Activated naive CD4-positive, alpha-beta T cell treated with anti-CD3 and anti-CD28 coated beads for 36 hours (primary cell): ENCODE measurements at regions of chrX and their contacts with region 1.

Region 1: DNA sequence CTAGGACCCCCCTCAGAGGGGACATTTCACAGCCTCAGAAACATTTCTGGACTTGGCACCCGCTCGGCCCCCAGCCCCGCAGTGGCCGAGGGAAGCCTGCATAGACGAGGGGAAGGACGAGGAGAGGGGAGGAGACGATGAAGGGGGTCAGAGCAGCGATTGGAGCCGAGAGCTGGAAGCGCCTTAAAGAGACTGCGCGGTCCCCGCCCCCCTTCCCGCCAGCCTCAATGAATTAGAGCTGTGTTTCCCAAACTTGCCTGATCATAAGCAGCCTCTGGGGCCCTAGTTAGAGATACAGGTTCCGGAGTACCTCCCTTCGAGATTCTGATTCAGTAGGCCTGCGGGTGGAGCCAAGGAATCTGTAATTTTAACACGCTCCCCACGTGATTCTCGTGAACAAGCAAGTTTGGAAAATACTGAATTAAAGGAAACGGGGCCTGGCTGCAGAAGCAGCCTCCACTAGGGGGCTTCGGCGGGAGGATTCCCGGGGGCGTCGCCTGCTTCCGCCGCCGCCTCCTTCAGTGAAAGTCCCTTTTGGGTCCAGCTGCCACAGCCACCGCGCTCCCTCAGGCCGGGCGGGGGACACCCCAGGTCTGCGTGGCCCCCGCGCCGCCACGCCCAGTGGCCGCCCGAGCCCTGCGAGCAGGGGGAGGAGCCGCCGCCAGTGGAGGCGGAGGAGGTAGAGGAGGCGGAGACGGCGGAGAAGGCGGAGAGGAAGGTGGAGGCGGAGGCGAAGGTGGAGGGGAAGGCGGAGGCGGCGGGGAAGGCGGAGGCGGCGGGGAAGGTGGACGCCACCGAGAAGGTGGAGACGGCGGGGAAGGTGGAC is at the start of gene USP27X:
- DNase-seq: peak; percentile 77
- H3K4me3 Mint-ChIP-seq: peak within 1 kb of the TSS; percentile 74
- H3K27ac Mint-ChIP-seq: peak within 1 kb of the TSS; percentile 76
- H3K4me1 Mint-ChIP-seq: peaks cover 32% of the 10 kb centered on the region
- H3K27me3 Mint-ChIP-seq: no peaks in the 10 kb centered on the region
- total RNA-seq, gene USP27X: 1.7 to 1.9 TPM

Region 2: DNA sequence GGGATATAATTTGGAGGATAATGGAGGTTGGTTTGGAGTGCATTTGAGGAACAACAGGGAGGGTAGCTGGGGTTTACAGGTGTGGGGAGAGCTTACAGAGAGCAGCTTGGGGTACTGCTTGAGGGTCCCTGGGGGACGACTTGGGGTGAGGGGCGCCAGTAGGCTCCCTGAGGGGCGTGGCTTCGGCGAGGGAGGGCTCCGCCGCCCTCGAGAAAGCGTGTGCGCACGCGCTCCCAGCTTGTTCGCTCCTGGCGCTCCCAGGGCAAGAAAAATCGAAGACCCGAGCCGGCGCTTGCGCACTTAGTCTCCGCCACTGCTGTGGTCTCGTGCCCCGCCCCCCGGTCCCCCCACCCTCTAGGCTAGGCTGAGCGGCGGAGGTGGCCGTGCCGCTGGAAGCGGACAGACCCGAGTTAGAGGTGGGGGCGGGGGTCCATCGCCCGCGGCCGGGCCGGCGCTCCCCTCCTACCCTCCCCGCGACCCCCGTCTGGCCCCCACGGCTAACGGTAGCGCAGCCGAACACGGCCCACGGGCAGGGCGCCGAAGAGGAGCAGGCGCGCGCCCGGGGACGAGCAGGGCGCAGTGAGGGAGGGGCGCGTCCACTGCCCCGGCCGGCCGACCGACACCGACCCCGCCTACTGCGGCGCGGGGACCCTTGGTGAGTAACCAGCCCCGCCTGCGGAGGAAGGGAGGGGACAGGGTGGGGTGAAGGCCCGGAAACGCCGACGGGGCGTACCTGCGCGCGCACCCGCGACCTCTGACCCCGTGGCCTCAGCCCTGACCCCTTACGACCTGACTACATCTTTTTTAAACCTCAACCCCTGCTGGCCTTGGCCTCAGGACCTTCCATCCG is 825.6 kb before region 1 on chrX:
- CTCF ChIA-PET with region 1: no interaction called
- intact Hi-C with region 1: loop called (anchors 5 kb)
- DNase-seq: peak; percentile 66
- H3K4me3 Mint-ChIP-seq: peak overlapping the region; percentile 72
- H3K27ac Mint-ChIP-seq: peak overlapping the region; percentile 68
- H3K4me1 Mint-ChIP-seq: peaks cover 31% of the 10 kb centered on the region
- H3K27me3 Mint-ChIP-seq: no peaks in the 10 kb centered on the region

Region 3: GRCh38 chrX:49191033-49191871 is 687.8 kb before region 1 on chrX:
- CTCF ChIA-PET with region 1: no interaction called
- intact Hi-C with region 1: loop called (anchors 5 kb)
- DNase-seq: peak; percentile 89
- H3K4me3 Mint-ChIP-seq: peak overlapping the region; percentile 97
- H3K27ac Mint-ChIP-seq: peak overlapping the region; percentile 94
- H3K4me1 Mint-ChIP-seq: peaks cover 25% of the 10 kb centered on the region
- H3K27me3 Mint-ChIP-seq: no peaks in the 10 kb centered on the region

Region 4: DNA sequence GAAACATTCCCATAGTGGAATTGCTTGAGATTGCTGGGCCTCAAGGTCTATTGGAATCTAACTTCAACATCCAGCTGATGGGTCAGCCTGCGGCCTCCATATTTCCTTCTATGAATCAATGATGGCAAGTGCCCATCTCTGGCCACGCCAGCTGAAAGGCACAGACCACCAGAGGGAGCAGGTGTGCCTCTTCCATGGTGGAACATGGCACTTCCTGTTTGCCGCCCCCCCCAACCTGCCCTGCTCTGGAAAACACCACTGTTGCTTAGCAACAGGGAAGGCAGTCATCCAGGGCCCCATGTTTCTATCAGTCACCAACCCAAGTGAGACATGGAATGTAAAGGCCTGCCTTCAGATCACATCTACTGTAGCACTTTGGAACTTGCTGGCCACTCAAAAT is 38.4 kb before region 1 on chrX:
- CTCF ChIA-PET with region 1: interaction called, 3 read pairs
- intact Hi-C with region 1: loop called (anchors 1 kb)
- DNase-seq: peak; percentile 79
- H3K4me3 Mint-ChIP-seq: no peak overlapping the region
- H3K27ac Mint-ChIP-seq: no peak overlapping the region
- H3K4me1 Mint-ChIP-seq: peaks cover 2% of the 10 kb centered on the region
- H3K27me3 Mint-ChIP-seq: no peaks in the 10 kb centered on the region

Region 5: GRCh38 chrX:49930039-49930438 is 51.0 kb after region 1 on chrX:
- CTCF ChIA-PET with region 1: no interaction called
- intact Hi-C with region 1: no loop called
- DNase-seq: no peak
- H3K4me3 Mint-ChIP-seq: no peak overlapping the region
- H3K27ac Mint-ChIP-seq: no peak overlapping the region
- H3K4me1 Mint-ChIP-seq: peaks cover 10% of the 10 kb centered on the region
- H3K27me3 Mint-ChIP-seq: no peaks in the 10 kb centered on the region